ENCODE measurements at regions of chr1 and their contacts with region 1.

Region 1: GRCh38 chr1:24847995-24848881 is 81.8 kb downstream of the RUNX3 start:
- DNase-seq: peak; percentile 81 to 95 (median 88)
- ATAC-seq: peak; percentile 92 to 98 (median 96)
- H3K4me3 ChIP-seq: peak overlapping the region; percentile 11 to 67 (median 40)
- H3K27ac ChIP-seq: peak overlapping the region in 2 of 4 donors; percentile 48 to 52
- H3K4me1 ChIP-seq: peaks cover 0 to 6% (median 4%) of the 10 kb centered on the region in 3 donors
- H3K27me3 ChIP-seq: no peaks in the 10 kb centered on the region
- CTCF ChIP-seq: peak; percentile 82 to 90 (median 88)

Region 2: GRCh38 chr1:25103164-25103795 is 255.0 kb after region 1 on chr1:
- intact Hi-C with region 1: loop called in 1 of 3 experiments (anchors 10 kb)
- DNase-seq: no peak
- ATAC-seq: no peak
- H3K4me3 ChIP-seq: no peak overlapping the region
- H3K27ac ChIP-seq: no peak overlapping the region
- H3K4me1 ChIP-seq: no peaks in the 10 kb centered on the region
- H3K27me3 ChIP-seq: no peaks in the 10 kb centered on the region
- CTCF ChIP-seq: no peak

Region 3: GRCh38 chr1:25204797-25205480 is 356.7 kb after region 1 on chr1:
- intact Hi-C with region 1: loop called in 1 of 3 experiments (anchors 5 kb)
- DNase-seq: peak in 1 of 6 donors; percentile 18
- ATAC-seq: peak; percentile 48 to 83 (median 80)
- H3K4me3 ChIP-seq: no peak overlapping the region
- H3K27ac ChIP-seq: no peak overlapping the region
- H3K4me1 ChIP-seq: no peaks in the 10 kb centered on the region
- H3K27me3 ChIP-seq: no peaks in the 10 kb centered on the region
- CTCF ChIP-seq: peak; percentile 56 to 79 (median 68)

Measured in pancreas (tissue), 10 donors.